Thyroid gland (tissue), 4 donors: ENCODE measurements at regions of chr5 and their contacts with region 1.

Region 1: GRCh38 chr5:159156426-159157238 is 52.7 kb downstream of the RNF145 start:
- DNase-seq: peak; percentile 6 to 8
- H3K4me3 ChIP-seq: no peak overlapping the region
- H3K27ac ChIP-seq: no peak overlapping the region
- H3K4me1 ChIP-seq: no peaks in the 10 kb centered on the region
- H3K27me3 ChIP-seq: no peaks in the 10 kb centered on the region
- CTCF ChIP-seq: peak; percentile 63 to 91 (median 81)
- POLR2A ChIP-seq: no peak

Region 2: GRCh38 chr5:159209438-159210305 is 53.0 kb after region 1 on chr5 and contains the start of gene RNF145:
- intact Hi-C with region 1: loop called (anchors 5 kb)
- DNase-seq: peak; percentile 95 to 97
- H3K4me3 ChIP-seq: peak within 1 kb of the TSS; percentile 21 to 84 (median 56)
- H3K27ac ChIP-seq: peak within 1 kb of the TSS; percentile 89 to 91 (median 89)
- H3K4me1 ChIP-seq: peaks cover 15 to 27% of the 10 kb centered on the region in 2 donors
- H3K27me3 ChIP-seq: no peaks in the 10 kb centered on the region
- CTCF ChIP-seq: no peak
- POLR2A ChIP-seq: peak in 1 of 2 donors; percentile 78
- total RNA-seq, gene RNF145: 59.5 to 88.6 (median 75.6) TPM

Region 3: DNA sequence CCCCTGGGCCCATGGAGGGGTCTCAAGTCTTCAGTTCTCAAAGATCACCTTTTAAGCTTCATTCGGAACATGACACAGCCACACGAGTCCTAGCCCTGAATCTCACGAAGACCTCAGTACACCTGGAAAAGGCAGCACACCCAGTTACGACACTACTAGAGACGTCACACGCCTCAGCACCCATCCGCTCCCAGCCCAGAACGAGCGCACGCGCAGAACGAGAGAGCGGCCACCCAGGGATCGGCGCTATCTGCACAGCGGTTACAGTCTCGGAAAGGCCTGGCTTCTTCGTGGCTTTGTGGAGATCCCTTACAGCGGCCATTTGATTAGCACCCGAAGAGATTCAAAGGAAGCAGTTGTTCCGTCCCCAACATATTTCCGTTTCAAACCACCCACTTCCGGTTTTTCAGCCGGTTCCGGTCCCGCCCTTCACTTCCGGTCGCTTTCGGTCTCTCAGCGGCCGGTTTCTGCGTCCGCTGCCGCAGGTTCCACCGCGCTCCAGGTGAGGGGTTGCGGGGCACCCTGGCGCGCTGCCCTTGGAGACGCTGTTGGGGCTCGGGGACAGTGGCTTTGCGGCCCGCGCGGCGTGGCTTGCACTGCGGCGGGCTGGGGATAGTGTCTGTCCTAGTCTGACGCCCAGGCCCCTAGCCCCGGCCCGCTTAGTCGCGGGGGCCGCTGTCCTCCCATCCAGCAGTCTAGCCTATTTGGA is 106.4 kb after region 1 on chr5 and contains the start of gene UBLCP1:
- intact Hi-C with region 1: loop called (anchors 5 kb)
- DNase-seq: peak; percentile 78 to 81
- H3K4me3 ChIP-seq: peak within 1 kb of the TSS; percentile 72 to 98 (median 80)
- H3K27ac ChIP-seq: peak within 1 kb of the TSS; percentile 75 to 91 (median 75)
- H3K4me1 ChIP-seq: peaks cover 0 to 15% of the 10 kb centered on the region in 2 donors
- H3K27me3 ChIP-seq: no peaks in the 10 kb centered on the region
- CTCF ChIP-seq: no peak
- POLR2A ChIP-seq: peak in 1 of 2 donors; percentile 67
- total RNA-seq, gene UBLCP1: 14.9 to 21.1 (median 19.3) TPM